Activated T-helper 1 cell treated with anti-CD3 and anti-CD28 coated beads, Interleukin-12 subunit alpha, Interleukin-12 subunit beta, Interleukin-2, Interleukin-4 antibody, amounts not matched to agents 30 ng/mL and 10 ng/mL and 1 ng/mL, durations not matched to agents 14 hours and 24 hours and 36 hours (primary cell): ENCODE measurements at regions of chr4 and their contacts with region 1.

Region 1: GRCh38 chr4:174365018-174365587 is 81.4 kb downstream of the CEP44 start:
- DNase-seq: no peak
- H3K4me3 Mint-ChIP-seq: no peak overlapping the region
- H3K27ac Mint-ChIP-seq: no peak overlapping the region
- H3K4me1 Mint-ChIP-seq: no peaks in the 10 kb centered on the region
- H3K27me3 Mint-ChIP-seq: peaks cover 7% of the 10 kb centered on the region

Region 2: DNA sequence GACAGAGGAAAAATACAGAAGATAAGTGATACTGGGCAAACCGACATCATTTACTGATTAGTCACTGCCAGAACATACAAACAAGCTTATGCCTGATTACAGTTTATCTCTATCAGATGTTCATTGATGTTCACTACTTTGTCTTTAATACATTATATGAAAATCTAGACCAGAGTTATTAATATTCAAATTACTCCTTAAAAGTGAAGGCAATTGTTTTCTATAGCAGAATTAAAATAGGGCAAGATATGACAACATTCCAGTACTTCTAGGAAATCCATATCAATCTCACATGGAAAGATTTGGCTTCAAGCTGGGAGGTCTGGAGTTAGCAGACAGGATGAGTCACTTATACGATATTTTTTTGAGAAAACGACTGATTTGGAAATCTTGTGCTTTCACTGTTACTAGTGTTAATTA is 125.4 kb after region 1 on chr4:
- intact Hi-C with region 1: loop called (anchors 5 kb)
- DNase-seq: no peak
- H3K4me3 Mint-ChIP-seq: no peak overlapping the region
- H3K27ac Mint-ChIP-seq: no peak overlapping the region
- H3K4me1 Mint-ChIP-seq: no peaks in the 10 kb centered on the region
- H3K27me3 Mint-ChIP-seq: peaks cover 2% of the 10 kb centered on the region

Region 3: GRCh38 chr4:174522183-174523048 is 157.3 kb after region 1 on chr4 and contains the start of gene HPGD:
- intact Hi-C with region 1: no loop called
- DNase-seq: peak; percentile 56
- H3K4me3 Mint-ChIP-seq: peak within 1 kb of the TSS; percentile 85
- H3K27ac Mint-ChIP-seq: peak within 1 kb of the TSS; percentile 74
- H3K4me1 Mint-ChIP-seq: peaks cover 23% of the 10 kb centered on the region
- H3K27me3 Mint-ChIP-seq: peaks cover 50% of the 10 kb centered on the region
- total RNA-seq, gene HPGD: 2.6 and 3.1 TPM in 2 replicates

Region 4: GRCh38 chr4:174714393-174715211 is 349.5 kb after region 1 on chr4:
- intact Hi-C with region 1: loop called (anchors 1 kb)
- DNase-seq: no peak
- H3K4me3 Mint-ChIP-seq: no peak overlapping the region
- H3K27ac Mint-ChIP-seq: no peak overlapping the region
- H3K4me1 Mint-ChIP-seq: no peaks in the 10 kb centered on the region
- H3K27me3 Mint-ChIP-seq: peaks cover 8% of the 10 kb centered on the region

Region 5: GRCh38 chr4:175891851-175892250 is 1526.7 kb after region 1 on chr4:
- intact Hi-C with region 1: loop called (anchors 10 kb)
- DNase-seq: no peak
- H3K4me3 Mint-ChIP-seq: no peak overlapping the region
- H3K27ac Mint-ChIP-seq: no peak overlapping the region
- H3K4me1 Mint-ChIP-seq: no peaks in the 10 kb centered on the region
- H3K27me3 Mint-ChIP-seq: no peaks in the 10 kb centered on the region